Pancreas (tissue), 10 donors: ENCODE measurements at regions of chr2 and their contacts with region 1.

Region 1: GRCh38 chr2:70142590-70143313 is 48.1 kb downstream of the C2orf42 start:
- DNase-seq: peak; percentile 97 to 100 (median 100)
- ATAC-seq: peak; percentile 74 to 82 (median 78)
- H3K4me3 ChIP-seq: peak overlapping the region in 3 of 4 donors; percentile 23 to 56 (median 51)
- H3K27ac ChIP-seq: peak overlapping the region; percentile 98 to 100 (median 98)
- H3K4me1 ChIP-seq: peaks cover 18 to 25% (median 20%) of the 10 kb centered on the region in 3 donors
- H3K27me3 ChIP-seq: no peaks in the 10 kb centered on the region
- CTCF ChIP-seq: peak; percentile 90 to 95 (median 94)

Region 2: DNA sequence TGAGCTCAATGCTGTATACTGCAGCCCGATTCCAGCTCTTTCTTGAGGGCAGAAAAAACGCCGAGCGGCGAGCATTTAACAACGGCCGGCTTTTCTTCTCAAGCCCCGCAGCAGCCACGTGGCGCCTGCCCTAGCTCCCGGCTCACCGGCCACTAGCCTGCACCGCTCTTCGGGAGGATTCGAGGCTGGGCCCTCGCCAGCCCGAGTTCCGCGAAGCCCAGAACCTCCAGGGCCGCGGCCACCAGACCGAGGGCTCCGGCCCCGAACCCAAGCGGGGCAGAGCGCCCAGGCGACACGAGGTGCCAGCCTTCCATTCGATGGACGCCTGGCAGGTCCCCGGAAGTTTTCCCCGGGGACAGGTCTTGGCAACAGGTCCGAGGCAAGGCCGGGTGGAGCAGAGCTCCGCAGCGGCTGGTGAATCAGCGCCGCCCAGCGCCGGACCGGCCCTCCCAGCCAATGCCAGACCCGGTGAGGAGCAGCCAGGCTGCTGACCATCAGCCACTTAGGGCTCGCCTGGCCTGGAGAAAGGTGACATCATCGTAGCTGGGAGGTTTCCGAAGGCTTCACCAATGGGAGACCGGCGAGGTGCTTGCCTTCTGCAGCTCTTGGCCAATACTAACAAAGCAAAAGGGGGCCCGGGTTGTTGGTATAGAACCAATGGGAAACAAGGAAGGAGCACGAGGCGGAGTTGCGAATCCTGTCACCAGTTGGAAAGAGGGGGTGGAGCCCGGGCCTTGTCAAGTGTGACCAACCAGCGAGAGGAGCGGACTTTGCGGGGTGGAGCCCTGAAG is 228.4 kb before region 1 on chr2:
- intact Hi-C with region 1: loop called in 2 of 3 experiments (anchors 5 to 10 kb)
- DNase-seq: peak; percentile 96 to 100 (median 100)
- ATAC-seq: peak; percentile 86 to 92 (median 88)
- H3K4me3 ChIP-seq: peak overlapping the region; percentile 29 to 72 (median 52)
- H3K27ac ChIP-seq: peak overlapping the region; percentile 93 to 100 (median 97)
- H3K4me1 ChIP-seq: peaks cover 0 to 8% (median 2%) of the 10 kb centered on the region in 3 donors
- H3K27me3 ChIP-seq: no peaks in the 10 kb centered on the region
- CTCF ChIP-seq: no peak

Region 3: DNA sequence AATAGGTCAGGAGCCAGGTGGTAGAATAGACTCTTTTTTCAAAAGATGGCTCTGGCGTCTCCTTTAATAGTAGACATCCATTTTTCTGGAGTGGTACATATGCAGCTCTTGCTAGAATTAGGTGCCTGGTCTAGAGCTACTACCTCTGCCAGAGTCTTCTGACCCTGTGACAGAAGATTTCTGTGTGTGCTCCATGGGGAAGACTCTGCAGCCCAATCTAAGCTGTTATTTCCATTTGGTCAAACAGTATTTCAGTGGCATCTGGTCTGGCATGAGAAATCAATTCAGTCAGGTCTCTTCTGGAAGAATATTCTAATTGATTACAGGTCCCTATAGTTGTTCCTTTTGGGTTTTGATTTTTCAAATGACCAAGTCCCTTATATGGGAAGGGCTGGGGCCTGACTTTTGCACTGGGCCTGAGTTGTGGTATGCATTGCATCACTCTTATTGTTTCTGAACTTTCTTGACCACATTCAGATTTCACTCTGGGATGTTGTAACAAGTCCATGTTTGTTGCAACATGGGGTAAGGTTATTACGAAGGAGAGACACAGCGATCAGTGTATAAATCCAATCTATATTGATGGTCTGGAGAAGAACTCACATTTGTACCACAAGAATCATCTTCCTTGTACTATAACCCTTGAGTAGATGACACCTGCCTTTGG is 215.8 kb before region 1 on chr2:
- intact Hi-C with region 1: no loop called
- DNase-seq: no peak
- ATAC-seq: peak in 1 of 4 donors; percentile 64
- H3K4me3 ChIP-seq: no peak overlapping the region
- H3K27ac ChIP-seq: no peak overlapping the region
- H3K4me1 ChIP-seq: no peaks in the 10 kb centered on the region
- H3K27me3 ChIP-seq: no peaks in the 10 kb centered on the region
- CTCF ChIP-seq: no peak

Region 4: GRCh38 chr2:70094978-70095719 is 47.6 kb before region 1 on chr2:
- intact Hi-C with region 1: loop called in 2 of 3 experiments (anchors 5 kb)
- DNase-seq: peak in 5 of 6 donors; percentile 65 to 77 (median 76)
- ATAC-seq: peak; percentile 87 to 94 (median 93)
- H3K4me3 ChIP-seq: no peak overlapping the region
- H3K27ac ChIP-seq: peak overlapping the region; percentile 61 to 95 (median 79)
- H3K4me1 ChIP-seq: peaks cover 10 to 15% (median 12%) of the 10 kb centered on the region in 3 donors
- H3K27me3 ChIP-seq: no peaks in the 10 kb centered on the region
- CTCF ChIP-seq: no peak